ENCODE measurements at regions of chr2 and their contacts with region 1.

Region 1: DNA sequence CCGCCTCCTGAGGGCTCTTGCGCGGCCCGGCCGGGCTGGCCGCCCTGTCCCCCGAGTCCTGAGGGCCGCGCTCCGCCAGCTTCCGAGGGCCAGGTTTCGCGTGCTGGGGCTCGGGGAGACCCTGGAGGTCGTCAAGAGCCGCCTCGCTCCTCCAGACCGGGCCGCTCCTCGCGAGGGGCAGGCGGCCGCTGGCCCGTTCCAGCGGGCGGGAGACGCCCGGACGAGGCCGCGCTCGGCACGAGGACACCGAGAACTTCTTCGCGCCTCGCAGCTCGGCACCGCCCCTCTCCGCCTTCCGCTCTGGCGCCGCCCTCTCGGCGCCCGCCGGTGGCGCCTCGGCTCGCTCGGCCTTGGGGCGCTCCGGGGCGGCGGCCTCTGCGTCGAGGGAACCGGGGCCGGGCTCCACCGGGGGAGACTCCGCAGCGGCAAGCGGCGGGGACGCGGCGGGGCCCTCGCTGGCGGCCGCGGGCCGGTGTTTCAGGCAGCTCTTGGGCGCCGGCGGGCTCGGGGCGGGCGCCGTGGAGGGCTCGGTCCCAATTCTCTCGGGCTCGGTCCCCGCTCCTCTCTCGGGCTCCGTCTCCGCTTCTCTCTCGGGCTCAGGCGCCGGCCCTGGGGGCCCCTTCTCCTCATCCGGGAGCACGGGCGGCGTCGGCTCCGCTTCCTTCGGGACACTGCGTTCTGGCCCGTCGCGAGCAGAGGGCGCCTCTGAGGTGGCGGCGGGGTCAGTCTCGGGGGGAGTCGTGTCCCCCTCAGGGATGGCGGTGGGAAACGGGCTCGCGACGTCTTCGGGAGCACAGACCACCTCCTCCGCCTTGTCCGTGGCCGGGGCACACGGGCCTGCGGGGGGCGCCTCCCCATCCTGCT is 91.6 kb upstream of the MGAT4A start:
- DNase-seq: peak; percentile 71 to 75
- ATAC-seq: peak; percentile 78 to 88 (median 82)
- H3K4me3 ChIP-seq: peak overlapping the region; percentile 24 to 64 (median 57)
- H3K27ac ChIP-seq: peak overlapping the region; percentile 83 to 97 (median 94)
- H3K4me1 ChIP-seq: peaks cover 6 to 75% (median 53%) of the 10 kb centered on the region in 9 donors
- H3K27me3 ChIP-seq: peaks cover 0 to 17% (median 4%) of the 10 kb centered on the region in 7 donors
- CTCF ChIP-seq: peak; percentile 6 to 60 (median 37)

Region 2: DNA sequence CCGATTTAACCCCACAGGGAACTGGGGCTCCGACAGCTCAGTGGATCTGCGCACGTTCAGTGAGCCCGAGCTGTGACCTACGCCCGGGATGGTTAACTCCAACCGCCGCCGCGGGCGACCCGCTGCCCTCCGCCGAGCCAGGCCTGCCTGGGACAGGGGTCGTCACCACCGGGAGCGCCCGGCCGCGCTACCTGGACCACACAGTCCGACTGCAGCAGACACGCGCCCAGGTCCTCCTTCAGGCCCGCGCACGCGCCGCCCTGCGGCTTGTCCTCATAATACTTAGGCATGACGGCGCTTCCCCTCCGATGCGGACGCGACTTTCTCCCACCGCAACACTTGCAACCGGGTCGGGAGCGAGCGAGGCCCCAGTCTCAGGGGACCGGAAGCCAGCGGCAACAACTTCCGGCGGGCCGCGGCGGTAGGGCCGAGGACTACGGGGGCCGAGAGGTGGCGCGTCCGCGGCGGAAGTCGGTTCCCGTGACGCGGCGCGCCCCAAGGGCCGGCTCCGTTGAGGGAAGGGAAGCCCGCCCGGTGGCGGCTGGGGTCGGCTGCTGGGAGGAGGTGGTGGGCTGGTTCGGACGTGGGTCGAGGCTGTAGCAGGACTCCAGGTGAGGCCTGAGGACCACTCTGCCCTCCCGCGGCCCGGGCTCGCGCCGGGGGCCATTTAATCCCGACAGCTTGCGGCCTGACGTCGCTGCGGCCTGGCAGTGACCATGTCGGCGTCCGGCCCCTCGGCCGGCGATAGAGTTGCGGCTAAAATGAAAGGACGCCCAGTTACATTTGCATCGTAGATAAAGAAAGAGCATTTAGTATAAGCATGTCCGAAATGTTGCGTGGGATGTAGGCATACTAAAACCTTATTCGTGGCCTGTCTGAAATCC is 214.2 kb before region 1 on chr2 and contains the starts of genes COA5 and UNC50:
- intact Hi-C with region 1: no loop called
- DNase-seq: peak; percentile 92
- ATAC-seq: peak; percentile 96 to 99 (median 98)
- H3K4me3 ChIP-seq: peak within 1 kb of the TSS; percentile 62 to 99 (median 94)
- H3K27ac ChIP-seq: peak within 1 kb of the TSS; percentile 84 to 100 (median 96)
- H3K4me1 ChIP-seq: peaks cover 16 to 65% (median 54%) of the 10 kb centered on the region in 9 donors
- H3K27me3 ChIP-seq: no peaks in the 10 kb centered on the region
- CTCF ChIP-seq: peak in 3 of 9 donors; percentile 2 to 18 (median 9)
- total RNA-seq, gene COA5: 20.2 to 33.8 (median 26.0) TPM
- total RNA-seq, gene UNC50: 21.3 to 34.2 (median 25.3) TPM

Region 3: GRCh38 chr2:98713332-98714015 is 109.1 kb before region 1 on chr2:
- intact Hi-C with region 1: no loop called
- DNase-seq: no peak
- ATAC-seq: no peak
- H3K4me3 ChIP-seq: no peak overlapping the region
- H3K27ac ChIP-seq: no peak overlapping the region
- H3K4me1 ChIP-seq: peaks cover 8 to 55% (median 21%) of the 10 kb centered on the region in 9 donors
- H3K27me3 ChIP-seq: no peaks in the 10 kb centered on the region
- CTCF ChIP-seq: no peak

Region 4: DNA sequence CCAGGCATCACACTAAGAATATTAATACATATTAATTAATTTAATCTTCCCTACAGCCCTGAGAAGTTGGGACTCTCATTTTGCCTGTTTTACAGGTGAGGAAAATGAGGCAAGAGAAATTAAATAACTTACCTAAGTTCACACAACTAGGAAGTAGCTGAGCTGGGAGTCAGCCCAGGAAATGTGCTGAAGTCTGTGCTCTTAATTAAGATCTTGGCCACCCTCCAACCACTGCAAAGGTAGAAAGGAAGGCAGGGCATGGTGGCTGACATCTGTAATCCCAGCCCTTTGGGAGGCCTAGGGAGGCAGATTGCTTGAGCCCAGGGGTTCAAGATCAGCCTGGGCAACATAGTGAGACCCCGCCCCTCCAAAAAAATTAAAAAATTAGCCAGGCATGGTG is 78.7 kb before region 1 on chr2:
- intact Hi-C with region 1: no loop called
- DNase-seq: peak in 1 of 2 donors; percentile 31
- ATAC-seq: peak in 7 of 8 donors; percentile 49 to 77 (median 67)
- H3K4me3 ChIP-seq: no peak overlapping the region
- H3K27ac ChIP-seq: peak overlapping the region in 2 of 10 donors; percentile 3 to 22
- H3K4me1 ChIP-seq: peaks cover 0 to 45% (median 13%) of the 10 kb centered on the region in 9 donors
- H3K27me3 ChIP-seq: no peaks in the 10 kb centered on the region
- CTCF ChIP-seq: no peak

Region 5: GRCh38 chr2:98757904-98758421 is 64.6 kb before region 1 on chr2:
- intact Hi-C with region 1: loop called in 1 of 10 experiments (anchors 1 kb)
- DNase-seq: peak; percentile 43 to 74
- ATAC-seq: peak; percentile 93 to 97 (median 96)
- H3K4me3 ChIP-seq: no peak overlapping the region
- H3K27ac ChIP-seq: peak overlapping the region in 8 of 10 donors; percentile 2 to 85 (median 38)
- H3K4me1 ChIP-seq: peaks cover 0 to 71% (median 18%) of the 10 kb centered on the region in 9 donors
- H3K27me3 ChIP-seq: no peaks in the 10 kb centered on the region
- CTCF ChIP-seq: peak in 3 of 9 donors; percentile 18 to 29 (median 20)

Measured in heart right ventricle (tissue), 16 donors.